ENCODE measurements at regions of chr12 and their contacts with region 1.

Region 1: DNA sequence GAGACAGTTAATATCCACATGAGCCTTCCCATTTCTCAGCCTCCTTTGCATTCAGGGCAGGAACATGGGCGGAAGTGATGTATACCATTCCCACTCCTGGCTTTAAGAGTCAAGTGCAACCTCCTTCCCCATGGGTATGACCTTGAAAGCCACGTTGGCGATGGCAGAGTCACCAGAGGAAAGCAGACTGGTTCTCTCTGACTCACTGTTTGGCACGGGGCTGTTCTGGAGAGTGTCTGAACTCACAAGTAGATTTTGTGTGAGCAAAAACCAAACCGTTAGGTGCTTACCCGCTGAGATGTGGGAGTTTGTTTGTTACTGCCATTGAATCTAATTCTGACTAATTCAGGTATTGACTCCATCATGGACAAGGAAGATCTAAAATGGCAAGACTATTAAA is 36.7 kb upstream of the PZP start:
- DNase-seq: no peak
- ATAC-seq: no peak

Region 2: GRCh38 chr12:9124383-9125031 is 120.4 kb before region 1 on chr12:
- intact Hi-C with region 1: loop called (anchors 5 kb)
- DNase-seq: no peak
- ATAC-seq: no peak

Region 3: DNA sequence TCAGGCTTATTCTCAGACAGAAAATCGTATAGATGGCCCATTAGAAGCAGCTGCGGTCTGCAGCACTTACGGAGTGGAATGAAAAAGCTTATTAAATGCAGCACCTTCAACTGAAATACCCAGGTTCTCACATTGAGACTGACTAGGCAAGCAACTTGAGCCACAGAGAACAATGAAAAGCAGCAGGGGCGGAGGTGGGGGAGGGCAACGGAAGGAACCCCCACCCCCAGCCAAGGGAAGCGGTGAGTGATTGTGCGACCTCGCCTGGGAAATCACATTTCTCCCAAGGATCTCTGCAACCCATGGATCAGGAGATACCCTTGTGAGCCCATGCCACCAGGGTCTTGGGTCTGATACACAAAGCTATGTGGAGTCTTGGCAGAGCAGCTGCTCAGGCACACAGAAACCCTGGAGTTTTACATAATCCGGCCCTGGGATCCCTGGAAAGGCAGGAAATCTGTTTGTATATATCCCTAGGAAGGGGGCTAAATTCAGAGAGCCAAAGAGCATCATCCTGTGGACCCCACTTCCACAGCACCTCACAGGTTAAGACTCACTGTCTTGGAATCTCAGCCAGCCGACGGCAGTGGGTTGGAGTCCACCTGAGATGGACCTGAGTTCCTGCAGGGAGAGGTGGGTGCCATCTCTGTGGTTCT is 74.8 kb before region 1 on chr12:
- intact Hi-C with region 1: loop called (anchors 5 kb)
- DNase-seq: peak; percentile 51
- ATAC-seq: no peak

Region 4: DNA sequence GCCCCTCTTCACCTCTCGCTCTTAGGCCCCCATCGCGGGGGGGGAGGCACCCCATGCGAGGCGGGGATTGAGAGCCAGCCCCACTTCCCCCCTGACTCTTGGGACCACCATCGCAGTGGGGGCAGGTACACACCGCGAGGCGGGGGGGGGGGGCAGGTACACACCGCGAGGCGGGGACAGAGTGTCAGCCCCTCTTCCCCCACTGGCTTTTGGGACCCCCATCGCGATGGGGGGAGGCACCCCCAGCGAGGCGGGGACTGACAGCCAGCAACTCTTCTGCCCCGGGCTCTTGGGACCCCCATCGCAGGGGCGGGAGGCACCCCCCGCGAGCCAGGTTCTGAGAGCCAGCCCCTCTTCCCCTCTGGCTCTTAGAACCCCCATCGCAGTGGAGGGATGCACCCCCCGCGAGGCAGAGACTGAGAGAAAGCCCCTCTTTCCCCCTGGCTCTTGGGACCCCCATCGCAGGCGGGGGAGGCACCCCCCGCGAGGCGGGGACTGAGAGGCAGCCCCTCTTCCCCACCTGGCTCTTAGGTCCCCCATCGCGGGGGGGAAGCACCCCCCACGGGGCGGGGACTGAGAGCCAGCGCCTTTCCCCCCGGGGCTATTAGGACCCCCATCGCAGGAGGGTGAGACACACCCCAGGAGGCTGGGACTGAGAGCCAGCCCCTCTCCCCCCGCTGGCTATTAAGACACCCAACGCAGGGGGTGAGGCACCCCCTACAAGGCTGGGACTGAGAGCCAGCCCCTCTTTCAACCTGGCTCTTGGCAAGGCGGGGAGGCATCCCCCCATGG is 159.8 kb after region 1 on chr12:
- intact Hi-C with region 1: no loop called
- DNase-seq: no peak
- ATAC-seq: no peak

Measured in Right ventricle myocardium inferior (tissue), 1 donor.